WTC11 (cell line): ENCODE measurements at regions of chr11 and their contacts with region 1.

Region 1: GRCh38 chr11:124415356-124415923 is 9.2 kb downstream of the OR8B4 start:
- DNase-seq: no peak
- ATAC-seq: no peak
- H3K4me3 Mint-ChIP-seq: no peak overlapping the region
- H3K27ac Mint-ChIP-seq: no peak overlapping the region
- H3K4me1 Mint-ChIP-seq: no peaks in the 10 kb centered on the region
- H3K27me3 Mint-ChIP-seq: no peaks in the 10 kb centered on the region
- CTCF ChIP-seq: peak; percentile 40

Region 2: DNA sequence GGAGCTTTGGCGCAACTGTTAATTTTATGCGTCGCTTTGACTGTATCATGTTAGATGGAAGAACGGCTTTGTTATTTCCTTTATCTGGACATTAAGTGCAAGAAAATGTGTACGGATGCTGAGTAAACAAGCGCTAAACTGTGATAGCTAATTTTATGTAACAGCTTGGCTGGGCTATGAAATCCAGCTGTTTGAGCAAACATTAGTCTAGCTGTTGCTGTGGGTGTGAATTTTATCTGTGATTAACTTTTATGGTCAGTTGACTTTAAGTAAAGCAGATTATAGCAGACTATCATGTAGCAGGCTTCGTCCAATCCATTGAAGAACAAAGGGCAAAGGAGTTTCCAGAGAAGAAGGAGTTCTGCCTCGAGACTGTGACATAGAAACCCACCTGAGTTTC is 168.3 kb after region 1 on chr11:
- CTCF ChIA-PET with region 1: interaction called, 20 read pairs
- POLR2A ChIA-PET with region 1: no interaction called
- DNase-seq: no peak
- ATAC-seq: no peak
- H3K4me3 Mint-ChIP-seq: no peak overlapping the region
- H3K27ac Mint-ChIP-seq: no peak overlapping the region
- H3K4me1 Mint-ChIP-seq: peaks cover 7% of the 10 kb centered on the region
- H3K27me3 Mint-ChIP-seq: no peaks in the 10 kb centered on the region
- CTCF ChIP-seq: no peak